GM12878 (cell line): ENCODE measurements at regions of chr2 and their contacts with region 1.

Region 1: GRCh38 chr2:74002487-74003391 is 18.0 kb downstream of the TET3 start:
- DNase-seq: no peak
- ATAC-seq: peak; percentile 96
- H3K4me3 ChIP-seq: peak overlapping the region; percentile 71
- H3K27ac ChIP-seq: peak overlapping the region; percentile 45; the same call in 1 of the 2 replicates
- H3K4me1 ChIP-seq: peaks cover 17% of the 10 kb centered on the region
- H3K27me3 ChIP-seq: no peaks in the 10 kb centered on the region
- CTCF ChIP-seq: no peak
- EP300 ChIP-seq: no peak
- POLR2A ChIP-seq: peak; percentile 63
- RAD21 ChIP-seq: no peak

Region 2: GRCh38 chr2:73907840-73908452 is 94.8 kb before region 1 on chr2:
- CTCF ChIA-PET with region 1: interaction called, 11 read pairs
- POLR2A ChIA-PET with region 1: interaction called, 4 read pairs
- RAD21 ChIA-PET with region 1: interaction called, 40 read pairs
- SMC1A ChIA-PET with region 1: interaction called, 10 read pairs
- in situ Hi-C with region 1: no loop called
- intact Hi-C with region 1: no loop called
- DNase-seq: peak; percentile 26
- ATAC-seq: peak; percentile 99
- H3K4me3 ChIP-seq: no peak overlapping the region
- H3K27ac ChIP-seq: no peak overlapping the region
- H3K4me1 ChIP-seq: no peaks in the 10 kb centered on the region
- H3K27me3 ChIP-seq: no peaks in the 10 kb centered on the region
- CTCF ChIP-seq: peak; percentile 58 to 76 (median 62)
- EP300 ChIP-seq: no peak
- POLR2A ChIP-seq: no peak
- RAD21 ChIP-seq: peak; percentile 83

Region 3: GRCh38 chr2:73970850-73971471 is 31.8 kb before region 1 on chr2:
- CTCF ChIA-PET with region 1: interaction called, 11 read pairs
- POLR2A ChIA-PET with region 1: interaction called, 3 read pairs
- RAD21 ChIA-PET with region 1: no interaction called
- SMC1A ChIA-PET with region 1: interaction called, 5 read pairs
- in situ Hi-C with region 1: no loop called
- intact Hi-C with region 1: no loop called
- DNase-seq: peak; percentile 88
- ATAC-seq: peak; percentile 84
- H3K4me3 ChIP-seq: peak overlapping the region; percentile 51; the same call in 1 of the 2 replicates
- H3K27ac ChIP-seq: peak overlapping the region; percentile 92
- H3K4me1 ChIP-seq: peaks cover 38% of the 10 kb centered on the region
- H3K27me3 ChIP-seq: no peaks in the 10 kb centered on the region
- CTCF ChIP-seq: no peak
- EP300 ChIP-seq: no peak
- POLR2A ChIP-seq: peak; percentile 53; the same call in 1 of the 2 replicates
- RAD21 ChIP-seq: no peak

Region 4: DNA sequence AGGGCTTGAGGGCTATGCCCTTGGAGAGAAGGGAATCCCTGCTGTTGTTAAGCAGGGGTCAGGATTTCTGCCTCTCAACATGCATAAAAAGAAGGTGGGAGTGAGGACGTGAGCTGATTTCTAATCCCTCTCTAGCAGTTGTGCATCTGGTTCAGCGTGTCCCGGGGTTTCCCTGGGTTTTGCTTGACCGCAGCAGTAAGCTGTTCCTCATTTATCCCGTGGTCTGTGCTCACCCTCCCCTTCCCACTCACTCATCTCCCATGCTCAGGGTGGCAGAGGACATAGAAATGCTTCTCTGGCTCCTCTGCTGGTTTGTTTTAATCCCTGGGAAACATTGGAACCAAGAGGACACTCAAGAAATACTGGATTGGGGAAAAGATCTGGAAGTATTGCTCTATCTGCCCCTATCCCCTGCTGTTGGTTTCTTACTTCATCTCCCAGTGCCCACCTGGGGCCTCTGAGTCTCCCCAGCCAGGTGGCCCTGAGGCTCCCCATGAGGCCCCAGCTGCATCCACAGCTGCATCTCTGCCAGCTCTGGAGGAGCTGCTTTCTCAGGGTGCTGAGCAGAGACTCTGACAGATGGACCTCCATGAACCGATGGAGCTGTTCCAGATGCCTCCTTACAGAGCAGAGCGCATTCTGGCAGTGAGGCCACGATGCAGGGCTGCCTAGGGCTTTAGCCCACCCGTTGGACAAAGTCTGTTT is 18.1 kb after region 1 on chr2:
- CTCF ChIA-PET with region 1: interaction called, 4 read pairs
- POLR2A ChIA-PET with region 1: interaction called, 7 read pairs
- RAD21 ChIA-PET with region 1: interaction called, 9 read pairs
- SMC1A ChIA-PET with region 1: interaction called, 14 read pairs
- in situ Hi-C with region 1: no loop called
- intact Hi-C with region 1: no loop called
- DNase-seq: no peak
- ATAC-seq: peak; percentile 67
- H3K4me3 ChIP-seq: no peak overlapping the region
- H3K27ac ChIP-seq: peak overlapping the region; percentile 76
- H3K4me1 ChIP-seq: peaks cover 32% of the 10 kb centered on the region
- H3K27me3 ChIP-seq: no peaks in the 10 kb centered on the region
- CTCF ChIP-seq: 0 out of 6 replicates have a peak, but pooled peaks of 1 of the 3 experiments have one; percentile 0
- EP300 ChIP-seq: peak in 1 of 2 experiments; percentile 32; a peak in 1 of 4 replicates
- POLR2A ChIP-seq: no peak
- RAD21 ChIP-seq: no peak

Region 5: GRCh38 chr2:74025971-74026612 is 23.4 kb after region 1 on chr2:
- CTCF ChIA-PET with region 1: interaction called, 3 read pairs
- POLR2A ChIA-PET with region 1: interaction called, 7 read pairs
- RAD21 ChIA-PET with region 1: interaction called, 27 read pairs
- SMC1A ChIA-PET with region 1: interaction called, 25 read pairs
- in situ Hi-C with region 1: no loop called
- intact Hi-C with region 1: no loop called
- DNase-seq: no peak
- ATAC-seq: peak; percentile 78
- H3K4me3 ChIP-seq: peak overlapping the region; percentile 38; the same call in 1 of the 2 replicates
- H3K27ac ChIP-seq: peak overlapping the region; percentile 64
- H3K4me1 ChIP-seq: peaks cover 50% of the 10 kb centered on the region
- H3K27me3 ChIP-seq: no peaks in the 10 kb centered on the region
- CTCF ChIP-seq: no peak
- EP300 ChIP-seq: no peak
- POLR2A ChIP-seq: no peak
- RAD21 ChIP-seq: no peak

Region 6: DNA sequence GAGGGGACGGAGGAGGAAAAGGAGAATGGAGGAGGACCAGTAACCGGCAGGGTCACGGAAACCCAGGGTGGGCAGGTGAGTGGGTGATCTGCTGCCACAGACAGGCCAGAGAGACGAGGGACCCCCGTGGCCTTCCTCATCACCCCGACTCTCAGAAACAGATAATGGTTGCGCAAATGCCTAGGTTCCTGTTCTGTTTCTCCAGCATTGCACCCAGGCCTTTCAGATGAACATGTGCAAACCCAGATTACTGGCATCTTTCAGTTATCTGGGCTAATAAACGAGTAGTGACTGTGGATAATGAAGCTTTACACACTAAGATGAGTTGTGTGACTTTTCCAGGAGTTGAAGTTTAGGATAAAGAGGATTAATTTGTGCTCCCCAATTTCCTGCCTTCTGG is 28.5 kb after region 1 on chr2:
- CTCF ChIA-PET with region 1: interaction called, 3 read pairs
- POLR2A ChIA-PET with region 1: interaction called, 10 read pairs
- RAD21 ChIA-PET with region 1: interaction called, 27 read pairs
- SMC1A ChIA-PET with region 1: interaction called, 25 read pairs
- in situ Hi-C with region 1: no loop called
- intact Hi-C with region 1: no loop called
- DNase-seq: no peak
- ATAC-seq: no peak
- H3K4me3 ChIP-seq: peak overlapping the region; percentile 73
- H3K27ac ChIP-seq: peak overlapping the region; percentile 73
- H3K4me1 ChIP-seq: peaks cover 65% of the 10 kb centered on the region
- H3K27me3 ChIP-seq: no peaks in the 10 kb centered on the region
- CTCF ChIP-seq: no peak
- EP300 ChIP-seq: no peak
- POLR2A ChIP-seq: no peak
- RAD21 ChIP-seq: no peak

Region 7: GRCh38 chr2:74080346-74080745 is 77.6 kb after region 1 on chr2:
- CTCF ChIA-PET with region 1: interaction called, 16 read pairs
- POLR2A ChIA-PET with region 1: interaction called, 3 read pairs
- RAD21 ChIA-PET with region 1: interaction called, 12 read pairs
- SMC1A ChIA-PET with region 1: interaction called, 6 read pairs
- in situ Hi-C with region 1: no loop called
- intact Hi-C with region 1: loop called (anchors 5 kb)
- DNase-seq: no peak
- ATAC-seq: peak; percentile 39
- H3K4me3 ChIP-seq: no peak overlapping the region
- H3K27ac ChIP-seq: peak overlapping the region; percentile 57
- H3K4me1 ChIP-seq: peaks cover 17% of the 10 kb centered on the region
- H3K27me3 ChIP-seq: no peaks in the 10 kb centered on the region
- CTCF ChIP-seq: peak; percentile 23 to 58 (median 28); a peak in 4 of 6 replicates
- EP300 ChIP-seq: peak in 1 of 2 experiments; percentile 7; a peak in 1 of 4 replicates
- POLR2A ChIP-seq: peak; percentile 30; the same call in 1 of the 2 replicates
- RAD21 ChIP-seq: peak; percentile 78

Region 8: GRCh38 chr2:74414881-74415761 is 412.4 kb after region 1 on chr2:
- CTCF ChIA-PET with region 1: no interaction called
- POLR2A ChIA-PET with region 1: no interaction called
- RAD21 ChIA-PET with region 1: no interaction called
- SMC1A ChIA-PET with region 1: no interaction called
- in situ Hi-C with region 1: no loop called
- intact Hi-C with region 1: no loop called
- DNase-seq: no peak
- ATAC-seq: peak; percentile 60
- H3K4me3 ChIP-seq: peak overlapping the region; percentile 46
- H3K27ac ChIP-seq: no peak overlapping the region
- H3K4me1 ChIP-seq: peaks cover 42% of the 10 kb centered on the region
- H3K27me3 ChIP-seq: no peaks in the 10 kb centered on the region
- CTCF ChIP-seq: peak in 2 of 3 experiments; percentile 16 to 26; a peak in 2 of 6 replicates
- EP300 ChIP-seq: no peak
- POLR2A ChIP-seq: no peak; the same call in 1 of the 2 replicates
- RAD21 ChIP-seq: no peak